ENCODE measurements at regions of chr18 and their contacts with region 1.

Region 1: GRCh38 chr18:57677262-57678211 is 55.9 kb upstream of the NARS1 start:
- DNase-seq: no peak
- H3K4me3 Mint-ChIP-seq: no peak overlapping the region
- H3K27ac Mint-ChIP-seq: no peak overlapping the region
- H3K4me1 Mint-ChIP-seq: no peaks in the 10 kb centered on the region
- H3K27me3 Mint-ChIP-seq: no peaks in the 10 kb centered on the region
- CTCF ChIP-seq: no peak

Region 2: GRCh38 chr18:57621246-57621604 is 56.3 kb before region 1 on chr18:
- CTCF ChIA-PET with region 1: interaction called, 11 read pairs
- intact Hi-C with region 1: no loop called
- DNase-seq: peak; percentile 12
- H3K4me3 Mint-ChIP-seq: peak overlapping the region; percentile 93
- H3K27ac Mint-ChIP-seq: peak overlapping the region; percentile 97
- H3K4me1 Mint-ChIP-seq: peaks cover 10% of the 10 kb centered on the region
- H3K27me3 Mint-ChIP-seq: no peaks in the 10 kb centered on the region
- CTCF ChIP-seq: no peak

Region 3: DNA sequence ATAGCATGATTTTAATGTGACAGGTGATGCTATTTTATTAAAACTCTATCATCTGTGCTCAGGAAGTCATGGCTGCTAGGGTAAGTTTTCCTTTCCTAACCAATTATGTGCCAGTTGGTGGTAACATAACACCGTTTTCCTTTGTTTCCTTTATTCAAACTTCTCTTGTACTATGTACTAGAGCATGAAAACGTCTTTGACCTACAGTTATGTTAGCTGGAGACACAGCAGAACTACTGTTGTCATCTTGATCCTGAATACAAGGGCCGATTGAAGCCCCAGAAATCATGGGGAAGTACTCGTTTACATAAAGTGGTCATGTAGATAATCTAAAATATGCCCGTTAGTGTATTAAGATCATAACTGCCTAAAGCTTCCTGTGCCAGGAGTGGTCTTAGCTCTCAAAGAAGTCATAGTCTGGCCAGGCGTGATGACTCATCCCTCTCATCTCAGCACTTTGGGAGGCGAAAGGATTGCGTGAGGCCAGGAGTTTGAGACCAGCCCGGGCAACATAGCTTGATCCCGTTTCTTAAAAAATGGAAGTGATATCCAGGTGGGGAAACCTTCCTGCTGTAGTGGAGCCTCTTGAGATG is 387.0 kb after region 1 on chr18:
- CTCF ChIA-PET with region 1: no interaction called
- intact Hi-C with region 1: no loop called
- DNase-seq: no peak
- H3K4me3 Mint-ChIP-seq: no peak overlapping the region
- H3K27ac Mint-ChIP-seq: no peak overlapping the region
- H3K4me1 Mint-ChIP-seq: peaks cover 31% of the 10 kb centered on the region
- H3K27me3 Mint-ChIP-seq: no peaks in the 10 kb centered on the region
- CTCF ChIP-seq: no peak